ENCODE measurements at regions of chrX and their contacts with region 1.

Region 1: DNA sequence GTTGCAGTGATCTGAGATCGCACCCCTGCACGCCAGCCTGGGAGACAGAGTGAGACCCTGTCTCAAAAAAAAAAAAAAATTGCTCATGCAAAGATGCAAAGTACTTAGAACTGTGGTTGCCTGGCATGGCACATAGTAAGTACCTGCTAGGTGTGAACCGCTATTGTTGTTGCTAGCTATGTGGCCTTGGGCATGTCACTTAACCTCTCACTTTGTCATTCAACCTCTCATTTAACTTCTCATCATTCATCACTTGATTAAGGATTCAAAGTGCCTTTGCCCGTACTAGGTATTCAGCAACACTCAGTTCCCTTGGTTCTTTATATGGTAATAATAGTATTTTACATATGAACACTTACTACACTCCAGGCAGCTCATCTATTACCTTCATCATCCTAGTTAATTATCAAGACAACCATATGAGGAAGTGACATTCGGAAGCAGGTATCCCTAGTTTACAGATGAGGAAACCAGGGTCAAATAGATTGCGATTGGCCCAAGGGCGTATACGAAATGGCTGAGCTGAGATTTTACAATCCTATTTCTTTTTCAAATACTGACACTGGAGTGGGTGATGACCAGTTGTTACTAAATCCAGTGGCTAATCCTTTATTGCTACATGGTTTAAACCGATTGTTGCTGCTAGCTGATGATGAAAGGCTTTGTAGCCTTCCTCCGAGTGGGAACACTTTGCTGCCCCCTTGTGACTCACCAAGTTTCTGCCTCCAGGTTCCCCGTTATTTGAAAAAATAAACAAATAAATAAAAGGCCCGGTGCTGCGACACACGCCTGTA is 28.8 kb upstream of the SOWAHD start:
- DNase-seq: peak; percentile 76
- ATAC-seq: peak; percentile 61
- H3K4me3 Mint-ChIP-seq: no peak overlapping the region
- H3K27ac Mint-ChIP-seq: no peak overlapping the region
- H3K4me1 Mint-ChIP-seq: peaks cover 13% of the 10 kb centered on the region
- H3K27me3 Mint-ChIP-seq: no peaks in the 10 kb centered on the region

Region 2: GRCh38 chrX:119606280-119607015 is 123.2 kb before region 1 on chrX and contains the start of gene NKRF:
- CTCF ChIA-PET with region 1: interaction called, 13 read pairs
- POLR2A ChIA-PET with region 1: interaction called, 3 read pairs
- DNase-seq: peak; percentile 93
- ATAC-seq: peak; percentile 80
- H3K4me3 Mint-ChIP-seq: peak within 1 kb of the TSS; percentile 91
- H3K27ac Mint-ChIP-seq: peak within 1 kb of the TSS; percentile 95
- H3K4me1 Mint-ChIP-seq: peaks cover 28% of the 10 kb centered on the region
- H3K27me3 Mint-ChIP-seq: no peaks in the 10 kb centered on the region
- total RNA-seq, gene NKRF: 16.3 to 18.4 TPM

Region 3: GRCh38 chrX:119676949-119677653 is 52.5 kb before region 1 on chrX:
- CTCF ChIA-PET with region 1: interaction called, 14 read pairs
- POLR2A ChIA-PET with region 1: interaction called, 7 read pairs
- DNase-seq: no peak
- ATAC-seq: no peak
- H3K4me3 Mint-ChIP-seq: peak overlapping the region; percentile 78
- H3K27ac Mint-ChIP-seq: peak overlapping the region; percentile 92
- H3K4me1 Mint-ChIP-seq: peaks cover 55% of the 10 kb centered on the region
- H3K27me3 Mint-ChIP-seq: no peaks in the 10 kb centered on the region

Region 4: GRCh38 chrX:119698845-119699244 is 30.8 kb before region 1 on chrX:
- CTCF ChIA-PET with region 1: interaction called, 37 read pairs
- POLR2A ChIA-PET with region 1: interaction called, 15 read pairs
- DNase-seq: no peak
- ATAC-seq: peak; percentile 49
- H3K4me3 Mint-ChIP-seq: no peak overlapping the region
- H3K27ac Mint-ChIP-seq: no peak overlapping the region
- H3K4me1 Mint-ChIP-seq: peaks cover 3% of the 10 kb centered on the region
- H3K27me3 Mint-ChIP-seq: no peaks in the 10 kb centered on the region

Measured in activated CD8-positive, alpha-beta T cell treated with anti-CD3 and anti-CD28 coated beads, Interleukin-2, amount 10 ng/mL, durations not matched to agents 7 days and 5 days (primary cell).